T-cell (primary cell): ENCODE measurements at regions of chr3 and their contacts with region 1.

Region 1: DNA sequence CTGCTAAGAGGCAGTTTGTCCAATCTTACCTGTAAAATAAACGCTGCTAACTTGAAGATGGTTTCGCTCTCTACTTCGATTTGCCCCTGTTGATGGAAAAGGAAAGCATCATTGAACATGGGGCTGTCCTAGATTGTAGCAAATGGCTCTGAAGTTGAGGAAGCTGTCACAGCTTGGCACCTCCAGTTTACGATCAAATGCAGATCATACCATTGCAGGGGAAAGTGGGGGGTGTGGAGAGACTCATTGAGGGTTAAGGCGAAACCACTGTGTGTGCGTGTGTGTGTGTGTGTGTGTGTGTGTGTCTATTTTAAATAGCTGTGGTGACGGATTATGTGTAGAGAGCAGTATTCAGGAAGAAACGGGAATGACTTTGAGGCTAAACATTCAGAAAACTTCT is 127.6 kb upstream of the LMOD3 start:
- DNase-seq: peak in 30 of 35 experiments; percentile 1 to 77 (median 39)
- ATAC-seq: peak; percentile 82 to 99 (median 91)
- H3K4me3 ChIP-seq: peak overlapping the region in 1 of 2 donors; percentile 10
- H3K4me3 Mint-ChIP-seq: peak overlapping the region; percentile 66 to 76 (median 68)
- H3K27ac ChIP-seq: no peak overlapping the region
- H3K27ac Mint-ChIP-seq: peak overlapping the region; percentile 66 to 80
- H3K4me1 ChIP-seq: no peaks in the 10 kb centered on the region
- H3K4me1 Mint-ChIP-seq: peaks cover 14 to 16% (median 14%) of the 10 kb centered on the region in 3 donors
- H3K27me3 ChIP-seq: no peaks in the 10 kb centered on the region
- H3K27me3 Mint-ChIP-seq: no peaks in the 10 kb centered on the region

Region 2: GRCh38 chr3:69209413-69209812 is 40.6 kb before region 1 on chr3:
- CTCF ChIA-PET with region 1: no interaction called
- POLR2A ChIA-PET with region 1: interaction called, 5 to 10 read pairs
- DNase-seq: no peak
- ATAC-seq: no peak
- H3K4me3 ChIP-seq: no peak overlapping the region
- H3K4me3 Mint-ChIP-seq: no peak overlapping the region
- H3K27ac ChIP-seq: no peak overlapping the region
- H3K27ac Mint-ChIP-seq: peak overlapping the region in 1 of 2 donors; percentile 19
- H3K4me1 ChIP-seq: peaks cover 0 to 4% of the 10 kb centered on the region in 2 experiments
- H3K4me1 Mint-ChIP-seq: peaks cover 0 to 38% (median 18%) of the 10 kb centered on the region in 3 donors
- H3K27me3 ChIP-seq: no peaks in the 10 kb centered on the region
- H3K27me3 Mint-ChIP-seq: no peaks in the 10 kb centered on the region

Region 3: DNA sequence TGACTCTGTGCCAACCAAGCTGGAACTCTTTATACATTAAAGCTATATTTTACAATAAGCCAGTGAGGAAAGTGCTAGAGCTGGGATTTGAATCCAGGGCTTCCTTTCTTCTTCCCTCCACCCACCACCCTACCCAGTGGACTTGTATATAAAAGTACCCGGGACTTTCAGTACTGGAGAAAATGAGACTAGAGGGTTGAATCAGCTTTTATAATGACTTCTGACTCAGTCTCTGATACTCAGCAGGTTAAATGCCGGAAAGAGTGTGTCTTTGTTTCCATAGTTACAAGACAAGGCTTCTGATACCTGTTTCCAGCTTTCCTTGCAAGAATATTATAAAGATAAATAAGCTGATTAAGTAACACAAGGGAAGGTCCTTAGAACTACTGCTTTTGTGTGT is 55.0 kb after region 1 on chr3:
- CTCF ChIA-PET with region 1: no interaction called
- POLR2A ChIA-PET with region 1: no interaction called
- DNase-seq: no peak
- ATAC-seq: no peak
- H3K4me3 ChIP-seq: no peak overlapping the region
- H3K4me3 Mint-ChIP-seq: no peak overlapping the region
- H3K27ac ChIP-seq: no peak overlapping the region
- H3K27ac Mint-ChIP-seq: no peak overlapping the region
- H3K4me1 ChIP-seq: no peaks in the 10 kb centered on the region
- H3K4me1 Mint-ChIP-seq: peaks cover 6 to 8% (median 7%) of the 10 kb centered on the region in 3 donors
- H3K27me3 ChIP-seq: no peaks in the 10 kb centered on the region
- H3K27me3 Mint-ChIP-seq: no peaks in the 10 kb centered on the region